Activated naive CD4-positive, alpha-beta T cell treated with anti-CD3 and anti-CD28 coated beads for 36 hours (primary cell): ENCODE measurements at regions of chr3 and their contacts with region 1.

Region 1: DNA sequence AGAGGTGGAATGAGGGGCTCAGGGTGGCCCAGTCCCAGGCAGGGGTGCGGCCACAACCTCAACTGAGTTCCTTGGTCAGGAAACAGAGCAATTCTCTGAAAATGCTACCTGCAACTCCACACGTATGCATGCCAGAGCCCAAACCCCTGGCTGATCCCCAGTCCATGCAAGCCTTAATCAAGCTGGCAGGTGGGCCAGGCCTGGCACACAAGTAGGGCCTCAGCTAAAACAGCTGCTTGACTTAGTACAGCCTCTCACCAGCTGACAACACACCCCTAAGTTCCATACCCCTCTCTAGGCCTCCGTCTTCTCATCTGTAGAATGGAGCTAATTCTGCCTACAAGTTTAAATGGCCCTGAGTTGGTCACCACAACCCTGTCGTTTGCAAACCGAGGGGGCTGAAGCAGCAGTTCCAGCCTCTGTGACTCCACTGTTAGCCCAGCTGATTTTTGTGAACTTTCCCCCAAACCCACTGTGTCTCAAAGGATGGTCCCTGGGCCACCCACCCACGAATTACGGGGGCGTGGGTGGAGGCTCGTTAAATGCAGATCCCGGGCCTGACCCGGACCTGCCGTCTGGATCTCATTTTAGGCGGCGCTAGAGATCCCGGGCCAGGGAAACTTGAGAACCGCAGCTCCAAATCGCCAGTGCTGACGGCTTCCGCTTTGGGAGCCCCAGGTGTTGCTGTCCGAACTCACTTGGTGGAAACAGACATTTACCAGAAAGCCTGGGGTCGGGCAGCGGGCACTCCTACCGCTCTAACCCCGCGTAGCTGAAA is 927 bp downstream of the CHDH start:
- DNase-seq: peak; percentile 13
- H3K4me3 Mint-ChIP-seq: peak overlapping the region; percentile 50
- H3K27ac Mint-ChIP-seq: no peak overlapping the region
- H3K4me1 Mint-ChIP-seq: peaks cover 2% of the 10 kb centered on the region
- H3K27me3 Mint-ChIP-seq: peaks cover 41% of the 10 kb centered on the region

Region 2: DNA sequence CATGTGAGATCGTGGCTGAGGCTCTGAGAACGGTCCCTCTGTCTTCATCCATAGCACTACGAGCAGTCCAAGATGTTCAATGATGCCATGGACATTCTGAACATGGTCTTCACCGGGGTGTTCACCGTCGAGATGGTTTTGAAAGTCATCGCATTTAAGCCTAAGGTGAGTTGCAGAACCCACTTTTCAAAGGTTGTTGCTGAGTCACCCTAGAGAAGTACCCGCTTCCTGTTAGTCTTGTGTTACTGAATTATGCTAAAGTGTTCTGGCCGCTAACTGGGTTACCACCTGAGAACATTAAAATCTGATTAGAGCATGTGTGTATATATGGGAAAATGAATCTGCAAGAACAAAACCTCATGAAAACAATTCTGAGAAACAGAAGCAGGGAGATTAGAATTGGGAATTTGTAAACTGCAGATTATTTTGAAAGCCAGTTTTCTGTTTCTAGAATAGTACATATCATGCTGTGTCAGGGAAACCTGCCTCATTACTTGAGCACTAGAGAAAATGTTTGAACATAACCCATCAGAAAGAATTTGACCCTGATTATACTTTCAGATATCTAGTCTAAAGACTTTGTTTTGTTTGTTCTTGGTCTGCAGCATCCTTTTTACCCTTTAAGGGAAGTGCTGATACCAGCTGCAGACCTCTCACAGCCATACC is 91.6 kb before region 1 on chr3:
- CTCF ChIA-PET with region 1: no interaction called
- intact Hi-C with region 1: loop called (anchors 5 kb)
- DNase-seq: peak; percentile 19
- H3K4me3 Mint-ChIP-seq: no peak overlapping the region
- H3K27ac Mint-ChIP-seq: no peak overlapping the region
- H3K4me1 Mint-ChIP-seq: peaks cover 15% of the 10 kb centered on the region
- H3K27me3 Mint-ChIP-seq: peaks cover 8% of the 10 kb centered on the region